ENCODE measurements at regions of chr1 and their contacts with region 1.

Region 1: GRCh38 chr1:209989525-209989924 is 51.5 kb downstream of the SYT14 start:
- H3K4me3 ChIP-seq: no peak overlapping the region
- H3K27ac ChIP-seq: no peak overlapping the region
- H3K4me1 ChIP-seq: no peaks in the 10 kb centered on the region
- CTCF ChIP-seq: no peak

Region 2: GRCh38 chr1:209850342-209850979 is 139.1 kb before region 1 on chr1:
- CTCF ChIA-PET with region 1: interaction called, 24 read pairs
- POLR2A ChIA-PET with region 1: interaction called, 3 read pairs
- H3K4me3 ChIP-seq: no peak overlapping the region
- H3K27ac ChIP-seq: no peak overlapping the region
- H3K4me1 ChIP-seq: 0 out of 2 replicates have a peak, but pooled peaks cover 5% of the 10 kb centered on the region
- CTCF ChIP-seq: peak; percentile 76

Region 3: DNA sequence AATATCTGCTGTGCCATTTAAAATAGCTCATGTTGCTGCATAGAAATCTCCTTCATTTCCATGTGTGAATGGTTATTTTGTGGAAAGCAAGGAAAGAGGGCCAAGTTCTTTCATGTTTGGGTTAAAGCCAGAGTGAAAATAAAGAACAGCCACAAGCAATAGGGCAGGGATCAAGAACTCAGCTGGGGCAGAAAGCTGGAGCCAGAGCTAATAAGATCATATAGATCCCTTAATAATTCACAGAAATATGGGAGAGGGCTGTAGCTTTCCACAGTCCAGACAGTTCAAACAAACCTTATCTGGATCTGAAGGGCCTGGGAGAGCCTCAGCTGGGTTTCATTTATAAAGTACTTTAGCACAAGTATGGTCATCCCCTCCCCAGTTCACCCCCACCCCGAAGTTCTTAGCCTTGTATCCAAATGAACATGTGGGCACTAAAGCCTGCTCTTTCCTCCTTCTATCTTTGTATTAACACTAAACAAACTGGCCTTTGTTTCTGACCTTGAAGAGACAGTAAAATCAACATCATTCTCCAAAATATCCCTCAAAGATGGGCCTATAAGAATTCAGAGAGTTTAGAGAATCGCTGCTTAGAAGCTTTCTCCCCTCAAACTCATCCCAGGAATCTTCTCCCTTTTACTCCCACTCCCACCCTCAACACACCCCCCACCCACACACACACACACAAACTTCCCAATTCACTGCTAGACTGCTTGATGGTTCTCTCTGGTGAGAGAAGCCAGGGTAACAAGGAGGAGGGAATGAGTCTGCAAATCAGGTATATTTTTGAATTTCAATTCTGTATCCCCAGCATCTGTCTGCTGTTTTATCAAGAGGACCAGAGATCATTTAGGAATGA is 120.0 kb before region 1 on chr1:
- CTCF ChIA-PET with region 1: interaction called, 84 read pairs
- POLR2A ChIA-PET with region 1: no interaction called
- H3K4me3 ChIP-seq: no peak overlapping the region
- H3K27ac ChIP-seq: no peak overlapping the region
- H3K4me1 ChIP-seq: no peaks in the 10 kb centered on the region
- CTCF ChIP-seq: no peak

Region 4: GRCh38 chr1:209883341-209883971 is 106.1 kb before region 1 on chr1:
- CTCF ChIA-PET with region 1: interaction called, 13 read pairs
- POLR2A ChIA-PET with region 1: no interaction called
- H3K4me3 ChIP-seq: no peak overlapping the region
- H3K27ac ChIP-seq: 0 out of 2 replicates have a peak overlapping the region, but pooled peaks have one; percentile 5
- H3K4me1 ChIP-seq: peaks cover 3% of the 10 kb centered on the region
- CTCF ChIP-seq: no peak

Region 5: DNA sequence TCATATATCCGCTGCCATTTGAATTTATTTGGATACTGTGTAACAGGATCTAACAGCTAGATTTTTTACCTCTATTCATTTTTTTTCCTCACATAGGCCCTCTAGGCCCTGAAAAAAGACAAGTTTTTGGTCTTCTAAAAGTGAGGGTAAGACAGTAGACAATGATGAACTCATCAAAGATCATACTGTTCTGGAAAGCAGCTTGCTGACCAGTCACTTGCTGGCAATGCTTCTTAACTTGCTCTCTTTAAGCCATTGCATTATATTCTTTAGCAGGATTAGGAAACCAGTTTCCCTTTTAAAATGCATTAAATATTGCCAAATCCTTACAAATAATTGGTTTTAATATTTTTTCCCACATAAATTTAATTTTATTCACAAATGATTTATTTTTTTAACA is 14.0 kb after region 1 on chr1:
- CTCF ChIA-PET with region 1: interaction called, 11 read pairs
- POLR2A ChIA-PET with region 1: no interaction called
- H3K4me3 ChIP-seq: no peak overlapping the region
- H3K27ac ChIP-seq: no peak overlapping the region
- H3K4me1 ChIP-seq: no peaks in the 10 kb centered on the region
- CTCF ChIP-seq: no peak

Region 6: DNA sequence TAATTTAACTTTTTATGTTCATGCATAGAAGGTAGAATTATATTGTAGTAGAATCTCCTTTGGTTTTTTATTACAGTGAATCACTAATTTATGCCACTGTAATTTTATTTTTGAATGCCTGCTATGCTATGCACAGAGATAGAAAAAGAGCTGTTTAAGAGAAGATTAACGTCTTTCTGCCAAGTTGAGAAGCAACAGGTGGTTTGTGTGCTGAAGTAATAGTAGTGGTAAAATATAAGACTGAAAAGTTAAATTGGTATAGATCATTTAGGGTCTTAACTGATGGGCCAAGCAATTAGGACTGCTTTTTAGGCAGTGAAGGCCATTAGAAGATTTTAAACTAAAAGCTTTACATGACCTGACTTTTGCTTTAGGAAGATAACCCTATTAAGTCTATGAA is 63.6 kb after region 1 on chr1:
- CTCF ChIA-PET with region 1: no interaction called
- POLR2A ChIA-PET with region 1: no interaction called
- H3K4me3 ChIP-seq: no peak overlapping the region
- H3K27ac ChIP-seq: no peak overlapping the region
- H3K4me1 ChIP-seq: no peaks in the 10 kb centered on the region
- CTCF ChIP-seq: no peak

Region 7: DNA sequence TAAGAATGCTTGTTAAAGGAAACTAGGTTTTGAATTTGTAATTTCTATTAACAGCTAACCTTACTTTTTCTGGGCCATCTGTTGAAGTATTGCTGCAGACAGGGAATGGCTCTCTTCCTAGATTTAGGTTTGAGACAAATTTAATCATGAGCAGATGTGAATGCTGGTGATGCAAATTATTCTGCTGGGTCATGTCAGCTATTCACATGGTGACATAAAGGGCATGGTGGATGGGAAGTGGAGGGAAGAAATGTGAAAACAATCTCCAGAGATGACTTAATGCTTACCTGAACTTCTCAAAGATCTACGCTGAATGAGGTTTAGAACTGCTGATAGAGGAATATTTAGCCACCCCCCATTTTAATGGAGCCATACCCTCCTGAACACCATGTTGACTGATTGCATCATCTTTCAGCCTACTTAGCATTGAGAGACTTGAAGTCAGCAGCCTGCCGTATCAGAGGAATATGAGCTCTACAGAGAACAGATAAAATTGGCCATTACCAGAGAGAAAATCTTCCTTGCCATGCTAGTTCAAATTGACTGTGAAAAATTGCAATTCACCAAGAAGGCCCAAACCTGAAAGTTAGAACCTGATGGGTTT is 478.0 kb after region 1 on chr1:
- CTCF ChIA-PET with region 1: no interaction called
- POLR2A ChIA-PET with region 1: no interaction called
- H3K4me3 ChIP-seq: no peak overlapping the region
- H3K27ac ChIP-seq: no peak overlapping the region
- H3K4me1 ChIP-seq: no peaks in the 10 kb centered on the region; the same call in 1 of the 2 replicates
- CTCF ChIP-seq: no peak